ENCODE measurements at regions of chr9 and their contacts with region 1.

Region 1: GRCh38 chr9:13427587-13427986 is 148.1 kb upstream of the MPDZ start:
- DNase-seq: no peak
- ATAC-seq: peak in 1 of 2 donors; percentile 51
- H3K4me3 ChIP-seq: no peak overlapping the region
- H3K27ac ChIP-seq: no peak overlapping the region
- H3K4me1 ChIP-seq: no peaks in the 10 kb centered on the region
- H3K27me3 ChIP-seq: no peaks in the 10 kb centered on the region
- CTCF ChIP-seq: peak; percentile 68

Region 2: GRCh38 chr9:13263511-13263910 is 164.1 kb before region 1 on chr9:
- intact Hi-C with region 1: no loop called
- DNase-seq: no peak
- ATAC-seq: no peak
- H3K4me3 ChIP-seq: no peak overlapping the region
- H3K27ac ChIP-seq: no peak overlapping the region
- H3K4me1 ChIP-seq: peaks cover 15% of the 10 kb centered on the region
- H3K27me3 ChIP-seq: no peaks in the 10 kb centered on the region
- CTCF ChIP-seq: no peak

Region 3: GRCh38 chr9:14353222-14354056 is 925.9 kb after region 1 on chr9:
- intact Hi-C with region 1: loop called (anchors 10 kb)
- DNase-seq: peak; percentile 92
- ATAC-seq: peak; percentile 85 to 88
- H3K4me3 ChIP-seq: peak overlapping the region; percentile 25
- H3K27ac ChIP-seq: peak overlapping the region; percentile 63
- H3K4me1 ChIP-seq: peaks cover 33% of the 10 kb centered on the region
- H3K27me3 ChIP-seq: peaks cover 30% of the 10 kb centered on the region
- CTCF ChIP-seq: peak; percentile 91

Region 4: GRCh38 chr9:14433351-14434157 is 1006.0 kb after region 1 on chr9:
- intact Hi-C with region 1: loop called (anchors 10 kb)
- DNase-seq: no peak
- ATAC-seq: peak; percentile 44 to 71
- H3K4me3 ChIP-seq: peak overlapping the region; percentile 5
- H3K27ac ChIP-seq: no peak overlapping the region
- H3K4me1 ChIP-seq: peaks cover 17% of the 10 kb centered on the region
- H3K27me3 ChIP-seq: no peaks in the 10 kb centered on the region
- CTCF ChIP-seq: no peak